PC-9 (cell line): ENCODE measurements at regions of chr1 and their contacts with region 1.

Region 1: DNA sequence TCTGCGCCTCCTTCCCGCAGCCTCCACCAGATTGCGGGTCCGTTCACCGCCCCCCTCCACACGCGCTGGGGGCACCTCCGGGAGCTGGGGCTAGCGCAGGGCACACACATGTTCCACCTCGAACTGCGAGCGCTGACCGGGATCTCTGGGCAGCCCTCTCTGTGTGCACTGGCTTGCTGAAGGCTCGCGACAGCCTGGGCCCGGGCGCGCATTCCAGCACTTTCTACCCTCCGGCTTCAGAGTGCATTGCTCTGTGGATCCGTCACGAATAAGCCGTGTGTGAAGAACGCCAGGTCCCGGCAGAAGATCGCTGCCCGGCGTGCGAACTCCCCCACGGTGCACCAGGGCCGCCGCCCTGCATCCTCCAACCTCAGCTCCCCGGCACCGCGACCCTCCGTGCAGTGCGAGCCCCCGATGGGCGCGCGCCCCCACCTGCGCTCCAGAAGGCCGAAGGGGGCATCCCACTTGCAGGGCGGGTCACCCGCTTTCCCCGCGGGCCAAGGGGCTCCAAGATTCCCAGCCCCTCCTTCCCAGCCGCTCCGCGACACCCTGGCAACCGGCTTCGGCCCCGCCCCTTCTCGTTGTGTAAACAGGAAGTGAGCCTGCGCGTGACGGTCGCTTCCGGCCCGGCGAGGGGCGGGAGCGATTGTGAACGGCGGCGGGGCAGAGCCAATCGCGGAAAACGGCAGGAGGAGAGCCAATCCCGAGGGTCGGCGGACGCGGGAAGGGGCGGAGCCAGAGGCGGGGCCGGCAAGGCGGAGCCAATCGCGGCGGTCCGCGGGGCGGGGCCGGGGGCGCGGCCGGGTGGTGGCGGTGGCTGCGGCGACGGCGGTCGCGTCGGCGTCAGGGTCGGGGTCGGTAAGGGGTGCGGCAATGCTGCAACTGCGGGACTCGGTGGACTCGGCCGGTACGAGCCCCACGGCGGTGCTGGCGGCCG is at the start of gene TPRG1L:
- DNase-seq: peak; percentile 86 to 98
- H3K4me3 ChIP-seq: peak within 1 kb of the TSS; percentile 99
- H3K27ac ChIP-seq: no peak within 1 kb of the TSS
- H3K4me1 ChIP-seq: peaks cover 20% of the 10 kb centered on the region
- H3K27me3 ChIP-seq: no peaks in the 10 kb centered on the region
- CTCF ChIP-seq: no peak
- total RNA-seq, gene TPRG1L: 41.4 and 44.9 TPM in 2 replicates

Region 2: GRCh38 chr1:3702990-3703728 is 78.7 kb after region 1 on chr1:
- CTCF ChIA-PET with region 1: no interaction called
- POLR2A ChIA-PET with region 1: no interaction called
- intact Hi-C with region 1: loop called (anchors 5 kb)
- DNase-seq: peak in 1 of 2 experiments; percentile 72
- H3K4me3 ChIP-seq: no peak overlapping the region
- H3K27ac ChIP-seq: no peak overlapping the region
- H3K4me1 ChIP-seq: peaks cover 38% of the 10 kb centered on the region
- H3K27me3 ChIP-seq: peaks cover 28% of the 10 kb centered on the region
- CTCF ChIP-seq: no peak

Region 3: DNA sequence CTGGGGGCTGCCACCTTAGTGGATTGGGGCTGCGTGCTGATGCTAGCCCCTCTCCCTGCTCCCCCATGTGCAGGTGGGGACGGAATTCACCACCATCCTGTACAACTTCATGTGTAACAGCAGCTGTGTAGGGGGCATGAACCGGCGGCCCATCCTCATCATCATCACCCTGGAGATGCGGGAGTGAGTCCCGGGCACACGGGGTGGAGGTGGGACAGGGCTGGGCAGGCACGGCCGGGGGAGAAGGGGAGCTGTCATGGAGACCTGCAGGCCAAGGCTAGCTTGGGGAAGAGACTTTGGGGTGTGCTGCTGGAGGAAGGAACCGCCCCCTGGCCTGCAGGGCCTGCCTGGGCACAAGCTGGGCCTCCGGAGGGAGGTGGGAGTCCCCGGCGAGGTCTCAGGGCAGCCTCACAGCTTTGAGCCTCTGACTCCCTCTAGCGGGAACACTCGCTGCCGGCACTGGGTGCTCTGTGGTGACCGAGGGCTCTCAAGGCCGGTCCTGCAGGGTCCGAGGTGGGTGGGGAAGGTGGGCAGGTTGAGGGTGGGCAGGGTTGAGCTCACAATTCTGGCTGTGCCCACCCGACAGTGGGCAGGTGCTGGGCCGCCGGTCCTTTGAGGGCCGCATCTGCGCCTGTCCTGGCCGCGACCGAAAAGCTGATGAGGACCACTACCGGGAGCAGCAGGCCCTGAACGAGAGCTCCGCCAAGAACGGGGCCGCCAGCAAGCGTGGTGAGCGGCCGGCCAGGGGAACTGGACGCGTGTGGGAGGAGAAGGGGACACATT is 102.8 kb after region 1 on chr1:
- CTCF ChIA-PET with region 1: interaction called, 4 read pairs
- POLR2A ChIA-PET with region 1: no interaction called
- intact Hi-C with region 1: loop called (anchors 2 kb)
- DNase-seq: no peak
- H3K4me3 ChIP-seq: no peak overlapping the region
- H3K27ac ChIP-seq: no peak overlapping the region
- H3K4me1 ChIP-seq: no peaks in the 10 kb centered on the region
- H3K27me3 ChIP-seq: 0 out of 2 replicates have a peak, but pooled peaks cover 4% of the 10 kb centered on the region
- CTCF ChIP-seq: peak; percentile 56; the same call in 1 of the 2 replicates